Gastrocnemius medialis (tissue), 4 donors: ENCODE measurements at regions of chr16 and their contacts with region 1.

Region 1: DNA sequence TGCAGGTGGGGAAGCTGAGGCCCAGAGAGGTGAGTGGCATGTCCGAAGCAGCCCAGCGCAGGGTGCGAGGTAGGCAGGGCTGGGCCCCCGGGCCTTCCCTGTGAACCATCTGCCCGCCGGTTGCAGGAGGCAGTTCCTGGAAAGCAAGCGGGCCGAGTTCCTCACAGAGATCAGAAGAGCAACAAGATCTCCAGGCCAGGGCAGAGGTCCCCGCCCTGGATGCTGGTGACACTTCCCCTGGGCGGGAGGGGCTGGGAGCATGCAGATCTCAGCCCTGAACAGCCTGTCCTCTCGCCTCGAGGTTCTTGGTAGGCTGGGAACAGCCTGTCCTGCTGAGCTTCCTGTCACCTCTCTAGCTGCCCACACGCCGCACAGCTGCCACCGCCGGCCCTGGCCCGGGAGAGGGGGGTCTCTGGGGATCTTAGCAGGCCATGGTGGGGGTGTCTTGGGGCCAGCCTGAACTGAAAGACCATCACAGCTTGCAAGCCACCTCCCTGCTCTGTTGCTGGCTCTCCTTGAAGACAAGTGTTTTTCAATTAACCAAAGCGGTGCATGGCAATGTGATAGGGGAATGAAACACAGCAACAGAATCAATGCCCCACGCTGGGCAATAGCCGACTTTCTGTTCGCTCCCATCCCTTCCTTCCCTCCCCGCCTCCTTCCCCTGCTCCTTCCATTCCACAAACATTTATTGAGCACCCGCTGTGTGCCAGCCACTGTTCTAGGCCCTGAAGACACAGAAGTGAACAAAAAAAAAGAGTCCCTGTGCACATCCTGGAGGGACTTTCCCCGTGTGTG is 31.7 kb downstream of the SOCS1 start:
- DNase-seq: peak; percentile 93
- ATAC-seq: peak; percentile 96 to 98
- H3K4me3 ChIP-seq: no peak overlapping the region
- H3K27ac ChIP-seq: peak overlapping the region; percentile 55 to 82 (median 78)
- H3K4me1 ChIP-seq: peaks cover 15 to 24% of the 10 kb centered on the region in 2 donors
- H3K27me3 ChIP-seq: no peaks in the 10 kb centered on the region
- CTCF ChIP-seq: no peak
- POLR2A ChIP-seq: peak; percentile 34 to 45

Region 2: DNA sequence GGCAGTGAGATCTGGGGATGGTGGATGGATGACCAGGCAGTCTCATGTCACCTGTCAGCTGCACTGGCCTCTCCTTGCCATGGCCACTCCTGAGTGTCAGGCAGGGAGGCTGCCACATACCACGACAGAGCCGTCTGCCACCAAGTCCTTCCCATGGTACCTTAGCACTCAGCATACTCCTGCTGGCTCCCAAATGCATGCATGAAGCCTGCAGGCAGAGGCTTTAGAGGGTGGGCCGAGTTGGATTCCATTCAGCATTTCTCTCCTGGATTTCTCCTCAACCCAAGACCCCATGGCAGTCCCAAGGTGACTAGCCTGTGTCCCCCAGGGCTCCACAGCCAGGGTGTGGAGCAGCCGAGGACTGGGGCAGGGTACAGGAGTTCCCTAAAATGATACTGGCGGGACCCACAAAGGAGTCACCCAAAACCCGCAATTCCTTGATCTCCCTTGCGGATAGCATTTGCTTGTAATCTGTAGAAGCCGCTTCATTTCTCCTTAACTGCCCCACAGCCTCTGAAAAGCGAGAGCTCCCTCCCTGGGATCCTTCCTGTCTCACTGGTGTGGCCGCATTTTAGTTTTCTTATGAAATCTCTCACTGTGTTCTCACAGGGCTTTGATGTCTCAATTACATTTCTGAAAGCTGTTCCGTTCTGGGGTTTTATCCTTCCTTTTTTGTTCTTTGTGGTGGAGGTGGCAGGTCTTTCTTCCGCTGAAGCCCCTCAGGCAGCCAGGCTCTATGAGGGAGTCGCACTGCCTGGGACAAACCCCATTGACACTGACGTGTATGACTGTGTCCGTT is 109.7 kb before region 1 on chr16:
- in situ Hi-C with region 1: no loop called
- intact Hi-C with region 1: no loop called
- DNase-seq: no peak
- ATAC-seq: no peak
- H3K4me3 ChIP-seq: no peak overlapping the region
- H3K27ac ChIP-seq: no peak overlapping the region
- H3K4me1 ChIP-seq: no peaks in the 10 kb centered on the region
- H3K27me3 ChIP-seq: no peaks in the 10 kb centered on the region
- CTCF ChIP-seq: no peak
- POLR2A ChIP-seq: no peak

Region 3: DNA sequence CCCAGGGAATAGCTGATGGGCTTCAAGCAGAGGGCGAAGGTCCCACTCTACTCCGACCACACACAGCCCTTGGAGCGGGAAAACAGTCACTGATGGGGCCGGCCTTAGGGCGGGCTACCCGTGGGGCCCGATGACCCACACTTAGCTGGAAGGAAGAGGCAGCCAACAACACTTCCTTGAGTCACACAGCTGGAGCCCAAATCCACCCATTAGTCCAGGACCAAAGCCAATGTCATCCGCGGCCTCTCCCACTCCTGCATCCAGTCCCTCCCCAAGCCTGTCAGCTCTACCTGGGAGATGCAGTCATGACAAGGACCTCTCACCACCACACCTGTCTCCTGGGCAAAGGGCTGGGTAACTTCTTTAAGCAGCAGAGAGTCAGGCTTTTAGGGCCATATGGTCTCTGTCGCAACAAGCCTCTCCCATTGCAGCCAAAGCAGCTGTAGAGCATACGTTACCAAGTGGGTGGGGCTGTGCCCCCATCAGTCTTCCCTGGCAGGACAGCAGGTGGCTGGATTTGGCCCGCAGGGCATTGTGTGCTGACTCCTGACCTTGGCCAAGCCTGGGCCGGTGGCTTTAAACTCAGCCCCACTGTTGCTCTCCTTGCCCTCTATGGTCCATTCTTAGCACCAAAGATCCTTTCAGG is 79.0 kb before region 1 on chr16:
- in situ Hi-C with region 1: loop called in 1 of 4 experiments (anchors 25 kb)
- intact Hi-C with region 1: loop called (anchors 5 kb)
- DNase-seq: peak; percentile 73 to 91
- ATAC-seq: peak; percentile 85 to 94
- H3K4me3 ChIP-seq: no peak overlapping the region
- H3K27ac ChIP-seq: peak overlapping the region; percentile 54 to 73 (median 68)
- H3K4me1 ChIP-seq: peaks cover 31 to 40% of the 10 kb centered on the region in 2 donors
- H3K27me3 ChIP-seq: no peaks in the 10 kb centered on the region
- CTCF ChIP-seq: peak in 1 of 5 experiments; percentile 34
- POLR2A ChIP-seq: peak; percentile 50 to 58

Region 4: DNA sequence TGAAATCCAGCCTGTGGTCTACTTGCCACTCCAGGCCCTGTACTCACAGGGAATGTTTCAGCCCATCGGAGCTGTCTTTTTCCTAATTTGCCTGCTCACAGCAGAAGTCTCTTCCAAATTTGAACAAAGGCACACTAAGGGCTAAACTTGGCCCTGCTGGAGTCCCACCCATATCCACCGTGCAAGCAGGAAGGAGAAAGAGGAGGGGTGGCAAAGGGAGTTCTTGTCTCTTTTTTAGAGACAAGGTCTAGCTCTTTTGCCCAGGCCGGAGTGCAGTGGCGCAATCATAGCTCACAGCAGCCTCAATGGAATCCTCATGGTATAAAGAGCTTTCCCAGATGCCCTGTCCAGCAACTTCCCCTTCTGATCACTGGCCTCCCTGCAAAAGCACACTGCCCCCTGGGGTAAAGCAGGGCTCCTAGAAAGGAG is 59.5 kb after region 1 on chr16:
- in situ Hi-C with region 1: no loop called
- intact Hi-C with region 1: no loop called
- DNase-seq: no peak
- ATAC-seq: no peak
- H3K4me3 ChIP-seq: no peak overlapping the region
- H3K27ac ChIP-seq: no peak overlapping the region
- H3K4me1 ChIP-seq: no peaks in the 10 kb centered on the region
- H3K27me3 ChIP-seq: no peaks in the 10 kb centered on the region
- CTCF ChIP-seq: no peak
- POLR2A ChIP-seq: no peak